Heart left ventricle (tissue), 16 donors: ENCODE measurements at regions of chr7 and their contacts with region 1.

Region 1: GRCh38 chr7:20598459-20599309 is 16.8 kb upstream of the ABCB5 start:
- DNase-seq: no peak
- ATAC-seq: peak in 3 of 4 donors; percentile 62 to 82 (median 69)
- H3K4me3 ChIP-seq: peak overlapping the region in 5 of 12 donors; percentile 3 to 39 (median 14)
- H3K27ac ChIP-seq: no peak overlapping the region
- H3K4me1 ChIP-seq: no peaks in the 10 kb centered on the region
- H3K27me3 ChIP-seq: peaks cover 0 to 19% (median 0%) of the 10 kb centered on the region in 9 donors
- CTCF ChIP-seq: peak; percentile 64 to 87 (median 78)
- POLR2A ChIP-seq: no peak

Region 2: GRCh38 chr7:19713676-19714075 is 885.0 kb before region 1 on chr7:
- intact Hi-C with region 1: loop called (anchors 2 to 10 kb)
- DNase-seq: no peak
- ATAC-seq: no peak
- H3K4me3 ChIP-seq: no peak overlapping the region
- H3K27ac ChIP-seq: no peak overlapping the region
- H3K4me1 ChIP-seq: peaks cover 0 to 9% (median 2%) of the 10 kb centered on the region in 12 donors
- H3K27me3 ChIP-seq: peaks cover 0 to 2% (median 0%) of the 10 kb centered on the region in 9 donors
- CTCF ChIP-seq: peak; percentile 33 to 64 (median 56)
- POLR2A ChIP-seq: no peak

Region 3: GRCh38 chr7:19754521-19755116 is 844.1 kb before region 1 on chr7:
- intact Hi-C with region 1: loop called (anchors 2 to 10 kb)
- DNase-seq: no peak
- ATAC-seq: no peak
- H3K4me3 ChIP-seq: no peak overlapping the region
- H3K27ac ChIP-seq: no peak overlapping the region
- H3K4me1 ChIP-seq: no peaks in the 10 kb centered on the region
- H3K27me3 ChIP-seq: peaks cover 0 to 9% (median 0%) of the 10 kb centered on the region in 9 donors
- CTCF ChIP-seq: peak; percentile 36 to 74 (median 68)
- POLR2A ChIP-seq: no peak

Region 4: DNA sequence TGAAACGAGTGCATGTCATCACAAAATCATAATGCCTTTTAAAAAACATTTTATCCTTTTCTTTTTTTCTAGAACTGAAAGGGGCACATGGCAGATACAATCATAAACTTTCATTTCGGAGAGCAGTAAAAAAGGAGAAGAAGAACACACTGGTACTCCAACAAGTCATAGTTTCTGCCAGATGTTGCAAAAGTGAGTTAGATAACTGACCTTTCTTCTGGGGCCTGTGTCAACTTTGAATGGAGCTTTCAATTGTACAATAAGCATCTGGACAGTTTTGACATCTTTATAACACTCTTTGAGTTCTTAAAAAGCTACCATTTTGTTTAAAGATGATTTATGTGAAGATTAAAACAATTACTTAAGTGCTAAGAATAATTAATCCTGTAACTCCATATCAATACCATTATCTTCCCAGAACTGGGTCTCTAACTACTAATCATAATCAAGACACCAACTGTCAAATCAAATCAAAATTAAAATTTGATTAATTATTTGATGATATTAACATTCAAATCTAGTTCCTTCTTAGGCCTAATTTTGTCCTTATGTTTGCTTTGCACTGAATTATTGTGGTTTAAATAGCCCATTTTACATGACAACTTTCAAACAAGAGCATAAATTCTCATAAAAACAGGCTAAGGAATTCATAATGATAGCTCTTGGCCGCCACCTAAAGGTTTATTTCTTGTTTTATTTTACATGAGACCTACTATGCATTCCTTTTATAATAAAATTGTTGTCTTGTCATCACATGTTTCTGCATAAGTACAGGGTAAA is 287.5 kb before region 1 on chr7:
- intact Hi-C with region 1: loop called in 1 of 10 experiments (anchors 10 kb)
- DNase-seq: no peak
- ATAC-seq: no peak
- H3K4me3 ChIP-seq: no peak overlapping the region
- H3K27ac ChIP-seq: no peak overlapping the region
- H3K4me1 ChIP-seq: peaks cover 0 to 4% (median 0%) of the 10 kb centered on the region in 12 donors
- H3K27me3 ChIP-seq: no peaks in the 10 kb centered on the region
- CTCF ChIP-seq: peak in 9 of 12 donors; percentile 17 to 48 (median 31)
- POLR2A ChIP-seq: no peak

Region 5: GRCh38 chr7:20407585-20408461 is 190.9 kb before region 1 on chr7:
- intact Hi-C with region 1: loop called in 1 of 10 experiments (anchors 10 kb)
- DNase-seq: peak; percentile 47 to 86 (median 68)
- ATAC-seq: peak; percentile 92 to 96 (median 94)
- H3K4me3 ChIP-seq: no peak overlapping the region
- H3K27ac ChIP-seq: peak overlapping the region; percentile 14 to 81 (median 53)
- H3K4me1 ChIP-seq: peaks cover 0 to 31% (median 20%) of the 10 kb centered on the region in 12 donors
- H3K27me3 ChIP-seq: no peaks in the 10 kb centered on the region
- CTCF ChIP-seq: no peak
- POLR2A ChIP-seq: no peak

Region 6: GRCh38 chr7:20491284-20491683 is 107.4 kb before region 1 on chr7:
- intact Hi-C with region 1: no loop called
- DNase-seq: no peak
- ATAC-seq: no peak
- H3K4me3 ChIP-seq: no peak overlapping the region
- H3K27ac ChIP-seq: no peak overlapping the region
- H3K4me1 ChIP-seq: no peaks in the 10 kb centered on the region
- H3K27me3 ChIP-seq: no peaks in the 10 kb centered on the region
- CTCF ChIP-seq: no peak
- POLR2A ChIP-seq: no peak